Activated T-helper 1 cell treated with anti-CD3 and anti-CD28 coated beads, Interleukin-12 subunit alpha, Interleukin-12 subunit beta, Interleukin-2, Interleukin-4 antibody, amounts not matched to agents 30 ng/mL and 10 ng/mL and 1 ng/mL, durations not matched to agents 14 hours and 24 hours and 36 hours (primary cell): ENCODE measurements at regions of chrX and their contacts with region 1.

Region 1: DNA sequence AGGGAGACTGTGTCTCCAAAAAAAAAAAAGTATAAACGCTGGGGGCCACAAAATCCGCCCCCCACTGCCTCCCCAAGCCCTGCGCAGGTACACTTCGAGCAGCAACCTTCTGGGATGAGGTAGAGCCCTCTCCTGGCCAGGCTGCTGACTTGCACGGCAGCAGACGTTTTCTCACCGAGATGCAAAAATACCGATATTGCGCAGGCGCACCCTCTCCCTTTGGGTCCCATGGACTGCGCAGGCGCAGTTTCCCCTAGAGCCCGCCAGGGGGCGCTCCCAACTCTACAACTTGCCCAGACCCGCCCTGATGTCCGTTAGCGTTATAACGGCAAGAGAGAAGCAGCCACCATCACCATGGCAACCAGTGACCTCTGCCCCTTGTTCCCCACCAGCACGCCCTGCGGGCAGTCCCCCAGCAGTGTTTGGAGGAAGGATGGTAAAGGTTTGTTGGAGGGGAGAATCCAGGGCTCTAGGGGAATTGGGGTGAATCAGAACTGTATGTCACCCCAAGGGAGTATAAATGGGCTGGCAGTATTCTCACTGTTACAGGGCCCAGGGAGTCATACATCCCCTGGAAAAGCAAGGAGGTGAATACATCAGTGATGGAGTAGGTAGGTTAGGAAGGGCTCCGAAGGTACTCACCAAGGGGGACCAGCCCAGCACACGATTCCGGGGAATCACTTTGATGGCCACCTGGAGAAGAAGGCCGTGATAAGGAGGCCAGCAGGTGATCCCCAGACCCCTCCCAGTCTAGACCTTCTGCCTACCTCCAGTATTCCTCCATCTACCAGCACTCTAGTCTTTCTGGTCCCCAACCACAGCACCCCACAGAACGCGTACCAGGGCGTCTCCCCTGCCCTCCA is 1.5 kb downstream of the PIM2 start:
- DNase-seq: peak; percentile 87
- H3K4me3 Mint-ChIP-seq: peak overlapping the region; percentile 98
- H3K27ac Mint-ChIP-seq: peak overlapping the region; percentile 97
- H3K4me1 Mint-ChIP-seq: peaks cover 35% of the 10 kb centered on the region
- H3K27me3 Mint-ChIP-seq: no peaks in the 10 kb centered on the region

Region 2: DNA sequence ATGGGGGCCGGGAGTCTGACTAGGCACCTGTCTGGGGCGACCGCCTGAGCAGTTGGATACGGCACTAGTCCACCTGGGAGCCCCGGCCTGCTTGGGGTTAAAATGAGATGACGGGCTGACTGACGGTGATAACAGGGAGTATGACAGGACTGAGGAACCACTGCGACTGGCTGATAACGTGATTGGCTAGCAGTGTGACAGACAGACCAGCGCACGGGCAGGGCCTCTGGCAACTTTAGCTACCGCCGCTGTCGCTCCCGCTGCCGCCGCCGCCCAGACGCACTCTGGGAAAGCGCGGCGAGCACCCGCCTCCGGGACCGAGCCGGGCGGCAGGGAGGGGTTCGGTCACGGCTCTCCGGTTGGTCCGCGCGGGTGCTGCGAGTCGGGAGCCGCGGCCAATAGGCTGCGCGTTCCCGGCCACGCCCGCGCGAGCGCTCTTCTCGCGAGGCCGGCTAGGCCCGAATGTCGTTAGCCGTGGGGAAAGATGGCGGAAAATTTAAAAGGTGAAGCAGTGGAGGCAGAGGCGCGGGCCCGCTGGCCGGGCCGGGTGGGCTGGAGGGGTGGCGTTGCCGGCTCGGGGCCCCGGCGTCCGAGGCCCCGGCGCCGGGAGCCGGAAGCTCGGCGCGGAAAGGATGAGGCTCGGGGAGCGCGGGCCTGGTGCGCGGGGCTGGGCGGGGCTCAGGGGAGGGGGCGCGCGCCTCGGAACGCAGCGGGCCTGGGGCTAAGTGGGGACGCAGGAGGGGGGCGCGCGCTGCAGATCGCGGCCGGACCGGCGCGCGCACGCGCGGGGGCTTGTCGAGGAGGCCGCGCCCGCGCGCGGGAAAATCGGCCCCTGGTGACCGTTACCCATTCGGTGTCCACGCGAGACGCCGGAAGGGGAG is 220.8 kb before region 1 on chrX and contains the start of gene SUV39H1:
- intact Hi-C with region 1: loop called (anchors 2 kb)
- DNase-seq: peak; percentile 85
- H3K4me3 Mint-ChIP-seq: peak within 1 kb of the TSS; percentile 93
- H3K27ac Mint-ChIP-seq: peak within 1 kb of the TSS; percentile 91
- H3K4me1 Mint-ChIP-seq: peaks cover 35% of the 10 kb centered on the region
- H3K27me3 Mint-ChIP-seq: peaks cover 2% of the 10 kb centered on the region
- total RNA-seq, gene SUV39H1: 27.5 and 27.7 TPM in 2 replicates

Region 3: DNA sequence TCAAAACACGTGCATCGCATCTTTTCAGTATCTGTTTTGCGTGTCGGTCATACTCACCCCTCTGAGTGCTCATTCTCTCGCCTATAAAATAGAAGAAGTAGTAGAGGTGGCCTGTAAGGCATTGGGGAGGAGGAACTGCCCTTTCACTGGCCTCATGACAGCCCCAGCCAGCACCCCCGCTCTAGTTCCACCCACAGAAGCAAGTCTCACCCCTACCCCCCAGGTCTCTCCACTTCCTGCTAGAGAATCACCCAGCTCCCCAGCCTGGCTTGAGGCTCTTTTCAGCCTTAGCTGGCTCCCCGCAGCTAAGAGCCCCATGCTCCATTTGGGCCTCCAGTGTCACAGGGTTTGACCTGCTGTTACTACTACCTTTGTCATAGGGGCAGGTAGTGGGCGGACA is 103.7 kb before region 1 on chrX:
- intact Hi-C with region 1: no loop called
- DNase-seq: no peak
- H3K4me3 Mint-ChIP-seq: no peak overlapping the region
- H3K27ac Mint-ChIP-seq: peak overlapping the region; percentile 56
- H3K4me1 Mint-ChIP-seq: no peaks in the 10 kb centered on the region
- H3K27me3 Mint-ChIP-seq: no peaks in the 10 kb centered on the region

Region 4: GRCh38 chrX:48891402-48892288 is 25.7 kb before region 1 on chrX:
- intact Hi-C with region 1: loop called (anchors 1 kb)
- DNase-seq: peak; percentile 72
- H3K4me3 Mint-ChIP-seq: peak overlapping the region; percentile 70
- H3K27ac Mint-ChIP-seq: peak overlapping the region; percentile 52
- H3K4me1 Mint-ChIP-seq: peaks cover 15% of the 10 kb centered on the region
- H3K27me3 Mint-ChIP-seq: no peaks in the 10 kb centered on the region

Region 5: GRCh38 chrX:48904626-48905025 is 12.7 kb before region 1 on chrX:
- intact Hi-C with region 1: no loop called
- DNase-seq: no peak
- H3K4me3 Mint-ChIP-seq: no peak overlapping the region
- H3K27ac Mint-ChIP-seq: no peak overlapping the region
- H3K4me1 Mint-ChIP-seq: no peaks in the 10 kb centered on the region
- H3K27me3 Mint-ChIP-seq: no peaks in the 10 kb centered on the region

Region 6: GRCh38 chrX:48937054-48937907 is 19.9 kb after region 1 on chrX:
- intact Hi-C with region 1: loop called (anchors 1 kb)
- DNase-seq: peak; percentile 85
- H3K4me3 Mint-ChIP-seq: peak overlapping the region; percentile 87
- H3K27ac Mint-ChIP-seq: peak overlapping the region; percentile 97
- H3K4me1 Mint-ChIP-seq: peaks cover 80% of the 10 kb centered on the region
- H3K27me3 Mint-ChIP-seq: no peaks in the 10 kb centered on the region

Region 7: DNA sequence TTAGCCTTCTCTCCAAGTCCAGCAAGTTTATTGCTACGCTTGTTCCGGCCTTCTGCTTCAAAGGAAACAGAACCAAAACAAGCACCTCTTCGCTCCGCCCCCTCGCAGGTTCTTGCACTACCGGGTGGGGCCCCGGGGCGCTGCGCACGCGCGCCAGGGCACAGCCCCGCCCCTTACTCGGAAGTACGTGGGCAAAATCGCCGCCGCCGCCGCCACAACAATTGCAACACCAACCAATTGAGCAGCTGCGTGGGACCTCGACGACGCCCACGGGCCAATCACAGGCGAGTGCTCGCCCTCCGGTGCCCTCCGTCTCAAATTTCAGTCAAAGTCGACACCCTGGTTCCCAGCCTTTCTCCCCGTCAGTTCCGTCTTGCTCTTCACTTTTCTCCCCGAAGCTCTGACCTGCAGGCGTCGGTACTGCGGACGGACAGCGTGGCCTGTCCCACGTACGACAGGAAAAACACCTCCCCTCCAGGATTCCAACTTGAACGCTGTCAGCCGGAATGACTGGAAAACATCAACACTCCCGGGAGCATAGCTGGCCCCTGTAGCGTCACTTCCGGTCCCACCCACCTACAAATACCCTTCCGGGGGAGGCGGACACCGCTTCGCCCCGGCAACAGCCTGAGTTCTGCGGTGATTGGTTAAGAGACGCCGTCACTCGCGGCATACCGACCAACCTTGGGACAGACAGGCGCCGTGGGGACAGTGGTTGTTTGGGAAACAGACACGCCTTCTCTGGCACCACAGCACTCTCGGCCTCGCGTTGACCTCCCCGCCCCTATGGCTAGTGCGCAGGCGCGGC is 40.7 kb after region 1 on chrX:
- intact Hi-C with region 1: loop called (anchors 1 kb)
- DNase-seq: peak; percentile 90
- H3K4me3 Mint-ChIP-seq: peak overlapping the region; percentile 98
- H3K27ac Mint-ChIP-seq: peak overlapping the region; percentile 100
- H3K4me1 Mint-ChIP-seq: peaks cover 33% of the 10 kb centered on the region
- H3K27me3 Mint-ChIP-seq: no peaks in the 10 kb centered on the region

Region 8: GRCh38 chrX:49163555-49164419 is 246.4 kb after region 1 on chrX:
- intact Hi-C with region 1: loop called (anchors 10 kb)
- DNase-seq: peak; percentile 77
- H3K4me3 Mint-ChIP-seq: peak overlapping the region; percentile 69
- H3K27ac Mint-ChIP-seq: peak overlapping the region; percentile 72
- H3K4me1 Mint-ChIP-seq: peaks cover 23% of the 10 kb centered on the region
- H3K27me3 Mint-ChIP-seq: peaks cover 4% of the 10 kb centered on the region